CD8-positive, alpha-beta T cell (primary cell): ENCODE measurements at regions of chr10 and their contacts with region 1.

Region 1: GRCh38 chr10:75099952-75100763 is 11.3 kb upstream of the SAMD8 start:
- DNase-seq: peak; percentile 59 to 89 (median 81)
- ATAC-seq: peak; percentile 99
- H3K4me3 ChIP-seq: no peak overlapping the region
- H3K4me3 Mint-ChIP-seq: no peak overlapping the region
- H3K27ac ChIP-seq: no peak overlapping the region
- H3K27ac Mint-ChIP-seq: no peak overlapping the region
- H3K4me1 ChIP-seq: peaks cover 9% of the 10 kb centered on the region
- H3K4me1 Mint-ChIP-seq: peaks cover 3% of the 10 kb centered on the region
- H3K27me3 ChIP-seq: no peaks in the 10 kb centered on the region
- H3K27me3 Mint-ChIP-seq: no peaks in the 10 kb centered on the region
- CTCF ChIP-seq: peak; percentile 87

Region 2: DNA sequence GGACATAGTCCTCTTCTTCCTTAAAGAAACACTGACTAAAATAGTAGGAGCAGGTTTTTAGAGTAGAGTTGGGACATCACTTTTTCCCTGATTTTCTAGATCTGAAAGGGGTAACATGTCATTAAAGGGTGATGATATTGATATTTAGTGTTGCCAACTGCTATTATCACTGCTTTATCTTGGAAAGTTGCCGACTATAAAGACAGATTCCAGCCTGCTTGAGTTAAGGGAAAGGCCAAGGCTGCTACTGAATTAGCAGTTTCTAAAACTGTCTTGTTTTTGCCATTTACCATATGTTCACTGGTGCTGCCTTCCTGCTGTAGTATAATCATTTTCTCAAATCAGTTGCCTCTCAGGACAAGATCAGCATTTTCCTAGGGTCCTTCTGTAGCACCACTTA is 979.2 kb before region 1 on chr10:
- CTCF ChIA-PET with region 1: no interaction called
- POLR2A ChIA-PET with region 1: no interaction called
- intact Hi-C with region 1: loop called in 1 of 2 experiments (anchors 2 kb)
- DNase-seq: no peak
- ATAC-seq: no peak
- H3K4me3 ChIP-seq: no peak overlapping the region
- H3K4me3 Mint-ChIP-seq: no peak overlapping the region
- H3K27ac ChIP-seq: no peak overlapping the region
- H3K27ac Mint-ChIP-seq: peak overlapping the region; percentile 53
- H3K4me1 ChIP-seq: no peaks in the 10 kb centered on the region
- H3K4me1 Mint-ChIP-seq: no peaks in the 10 kb centered on the region
- H3K27me3 ChIP-seq: no peaks in the 10 kb centered on the region
- H3K27me3 Mint-ChIP-seq: no peaks in the 10 kb centered on the region
- CTCF ChIP-seq: no peak

Region 3: DNA sequence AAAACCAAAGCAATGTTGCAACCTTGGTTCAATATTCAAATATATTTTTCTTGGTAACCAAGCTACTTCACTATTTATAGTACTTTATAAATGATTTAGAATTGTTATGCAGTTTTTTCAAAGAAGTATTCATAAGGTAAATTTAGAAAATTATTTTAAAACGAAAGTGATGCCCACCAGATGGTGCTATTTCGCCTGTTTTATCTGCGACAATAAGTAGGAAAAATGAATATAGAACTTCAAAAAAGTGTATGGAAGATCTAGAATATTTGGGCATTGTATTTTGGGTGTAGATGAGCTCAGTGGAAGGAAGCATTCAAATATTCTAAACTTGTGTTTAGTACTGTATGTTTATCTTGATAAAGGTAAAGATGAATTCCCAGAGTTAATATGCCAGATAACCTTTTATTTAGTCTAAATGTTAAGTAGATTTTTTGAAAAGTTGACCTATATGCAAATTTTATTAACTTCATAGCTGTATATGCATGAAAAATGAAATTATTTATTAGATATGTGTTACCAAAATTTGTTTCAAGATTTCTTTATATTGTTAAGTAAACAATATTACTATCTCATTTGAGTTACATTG is 856.0 kb before region 1 on chr10:
- CTCF ChIA-PET with region 1: interaction called, 55 read pairs
- POLR2A ChIA-PET with region 1: no interaction called
- intact Hi-C with region 1: loop called (anchors 1 kb)
- DNase-seq: peak in 3 of 9 experiments; percentile 26 to 68 (median 60)
- ATAC-seq: no peak
- H3K4me3 ChIP-seq: no peak overlapping the region
- H3K4me3 Mint-ChIP-seq: no peak overlapping the region
- H3K27ac ChIP-seq: no peak overlapping the region
- H3K27ac Mint-ChIP-seq: no peak overlapping the region
- H3K4me1 ChIP-seq: no peaks in the 10 kb centered on the region
- H3K4me1 Mint-ChIP-seq: peaks cover 2% of the 10 kb centered on the region
- H3K27me3 ChIP-seq: no peaks in the 10 kb centered on the region
- H3K27me3 Mint-ChIP-seq: no peaks in the 10 kb centered on the region
- CTCF ChIP-seq: peak; percentile 73

Region 4: GRCh38 chr10:74262856-74263255 is 837.3 kb before region 1 on chr10:
- CTCF ChIA-PET with region 1: interaction called, 16 read pairs
- POLR2A ChIA-PET with region 1: no interaction called
- intact Hi-C with region 1: loop called (anchors 1 kb)
- DNase-seq: no peak
- ATAC-seq: no peak
- H3K4me3 ChIP-seq: no peak overlapping the region
- H3K4me3 Mint-ChIP-seq: no peak overlapping the region
- H3K27ac ChIP-seq: no peak overlapping the region
- H3K27ac Mint-ChIP-seq: peak overlapping the region; percentile 58
- H3K4me1 ChIP-seq: no peaks in the 10 kb centered on the region
- H3K4me1 Mint-ChIP-seq: peaks cover 7% of the 10 kb centered on the region
- H3K27me3 ChIP-seq: no peaks in the 10 kb centered on the region
- H3K27me3 Mint-ChIP-seq: no peaks in the 10 kb centered on the region
- CTCF ChIP-seq: no peak

Region 5: DNA sequence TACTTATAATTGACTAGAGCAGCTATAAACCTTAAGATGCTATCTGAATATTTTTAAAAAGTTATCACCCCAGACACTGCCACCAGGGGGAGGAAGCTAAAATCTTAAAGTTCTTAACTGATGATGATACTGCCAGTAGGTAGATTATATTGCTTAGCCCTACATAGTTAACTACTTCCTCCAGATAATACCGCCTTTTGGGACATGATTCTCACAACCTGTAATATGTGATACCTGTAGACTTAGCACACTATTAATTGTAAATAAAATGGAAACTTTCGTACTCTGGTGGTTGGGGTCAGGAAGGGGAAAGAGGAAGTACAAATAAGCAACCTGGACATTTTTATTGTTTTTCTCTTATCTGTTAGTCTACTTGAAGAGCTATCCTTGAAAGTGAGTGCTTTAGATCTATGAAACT is 680.2 kb before region 1 on chr10:
- CTCF ChIA-PET with region 1: no interaction called
- POLR2A ChIA-PET with region 1: no interaction called
- intact Hi-C with region 1: loop called in 1 of 2 experiments (anchors 1 kb)
- DNase-seq: peak in 7 of 9 experiments; percentile 1 to 54 (median 36)
- ATAC-seq: peak; percentile 58
- H3K4me3 ChIP-seq: no peak overlapping the region
- H3K4me3 Mint-ChIP-seq: no peak overlapping the region
- H3K27ac ChIP-seq: no peak overlapping the region
- H3K27ac Mint-ChIP-seq: no peak overlapping the region
- H3K4me1 ChIP-seq: no peaks in the 10 kb centered on the region
- H3K4me1 Mint-ChIP-seq: peaks cover 5% of the 10 kb centered on the region
- H3K27me3 ChIP-seq: no peaks in the 10 kb centered on the region
- H3K27me3 Mint-ChIP-seq: no peaks in the 10 kb centered on the region
- CTCF ChIP-seq: peak; percentile 55

Region 6: GRCh38 chr10:74640134-74640931 is 459.8 kb before region 1 on chr10:
- CTCF ChIA-PET with region 1: no interaction called
- POLR2A ChIA-PET with region 1: no interaction called
- intact Hi-C with region 1: no loop called
- DNase-seq: no peak
- ATAC-seq: no peak
- H3K4me3 ChIP-seq: no peak overlapping the region
- H3K4me3 Mint-ChIP-seq: no peak overlapping the region
- H3K27ac ChIP-seq: no peak overlapping the region
- H3K27ac Mint-ChIP-seq: no peak overlapping the region
- H3K4me1 ChIP-seq: no peaks in the 10 kb centered on the region
- H3K4me1 Mint-ChIP-seq: no peaks in the 10 kb centered on the region
- H3K27me3 ChIP-seq: no peaks in the 10 kb centered on the region
- H3K27me3 Mint-ChIP-seq: no peaks in the 10 kb centered on the region
- CTCF ChIP-seq: no peak

Region 7: GRCh38 chr10:74738985-74739567 is 361.1 kb before region 1 on chr10:
- CTCF ChIA-PET with region 1: interaction called, 3 read pairs
- POLR2A ChIA-PET with region 1: no interaction called
- intact Hi-C with region 1: loop called in 1 of 2 experiments (anchors 1 kb)
- DNase-seq: peak in 6 of 9 experiments; percentile 2 to 68 (median 44)
- ATAC-seq: peak; percentile 71
- H3K4me3 ChIP-seq: no peak overlapping the region
- H3K4me3 Mint-ChIP-seq: peak overlapping the region; percentile 56
- H3K27ac ChIP-seq: peak overlapping the region in 1 of 2 experiments; percentile 59
- H3K27ac Mint-ChIP-seq: peak overlapping the region; percentile 86
- H3K4me1 ChIP-seq: peaks cover 19% of the 10 kb centered on the region
- H3K4me1 Mint-ChIP-seq: peaks cover 26% of the 10 kb centered on the region
- H3K27me3 ChIP-seq: no peaks in the 10 kb centered on the region
- H3K27me3 Mint-ChIP-seq: no peaks in the 10 kb centered on the region
- CTCF ChIP-seq: peak; percentile 33

Region 8: DNA sequence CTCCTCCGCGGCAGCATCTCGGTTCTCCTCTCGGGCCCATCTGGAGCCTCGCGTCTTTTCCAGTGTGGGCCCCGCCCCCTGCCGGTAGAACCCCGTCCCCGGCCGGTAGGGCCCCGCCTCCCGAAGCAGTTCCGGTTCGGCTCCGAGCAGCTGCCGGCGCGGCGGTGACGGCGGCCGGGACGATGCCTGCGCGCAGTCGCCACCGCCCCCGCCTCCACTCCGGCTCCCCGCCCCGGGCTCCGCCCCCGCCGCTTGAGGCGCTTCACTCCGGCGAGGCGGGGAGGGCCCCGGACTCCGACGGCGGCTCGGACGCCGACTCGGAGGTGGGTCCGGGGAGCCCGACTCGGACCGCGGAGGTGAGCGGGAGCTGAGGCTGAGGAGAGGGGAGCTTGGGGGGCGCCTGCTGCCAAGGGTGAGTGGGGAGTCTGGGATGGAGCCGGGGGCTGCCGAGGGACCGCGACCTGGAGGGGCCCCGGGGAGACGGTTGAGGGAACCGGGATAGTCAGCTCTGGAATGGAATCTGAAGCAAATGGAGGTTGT is 11.3 kb after region 1 on chr10 and contains the start of gene SAMD8:
- CTCF ChIA-PET with region 1: interaction called, 25 read pairs
- POLR2A ChIA-PET with region 1: interaction called, 3 read pairs
- intact Hi-C with region 1: no loop called
- DNase-seq: peak; percentile 83 to 98 (median 94)
- ATAC-seq: peak; percentile 77
- H3K4me3 ChIP-seq: peak within 1 kb of the TSS; percentile 68 to 99
- H3K4me3 Mint-ChIP-seq: peak within 1 kb of the TSS; percentile 83
- H3K27ac ChIP-seq: peak within 1 kb of the TSS; percentile 77 to 97
- H3K27ac Mint-ChIP-seq: peak within 1 kb of the TSS; percentile 97
- H3K4me1 ChIP-seq: peaks cover 20% of the 10 kb centered on the region
- H3K4me1 Mint-ChIP-seq: peaks cover 56% of the 10 kb centered on the region
- H3K27me3 ChIP-seq: no peaks in the 10 kb centered on the region
- H3K27me3 Mint-ChIP-seq: no peaks in the 10 kb centered on the region
- CTCF ChIP-seq: no peak
- total RNA-seq, gene SAMD8: 41.2 to 41.4 TPM